Activated CD4-positive, alpha-beta memory T cell treated with anti-CD3 and anti-CD28 coated beads, Interleukin-2, amount 10 ng/mL, durations not matched to agents 7 days and 5 days (primary cell): ENCODE measurements at regions of chr2 and their contacts with region 1.

Region 1: GRCh38 chr2:113173542-113174395 is at the start of gene PSD4:
- DNase-seq: peak; percentile 95
- H3K4me3 Mint-ChIP-seq: peak within 1 kb of the TSS; percentile 80
- H3K27ac Mint-ChIP-seq: peak within 1 kb of the TSS; percentile 85
- H3K4me1 Mint-ChIP-seq: peaks cover 73% of the 10 kb centered on the region
- H3K27me3 Mint-ChIP-seq: no peaks in the 10 kb centered on the region
- total RNA-seq, gene PSD4: 261 to 272 TPM

Region 2: GRCh38 chr2:113098041-113098440 is 75.7 kb before region 1 on chr2:
- CTCF ChIA-PET with region 1: no interaction called
- POLR2A ChIA-PET with region 1: interaction called, 16 read pairs
- DNase-seq: peak; percentile 35
- H3K4me3 Mint-ChIP-seq: peak overlapping the region; percentile 63
- H3K27ac Mint-ChIP-seq: peak overlapping the region; percentile 75
- H3K4me1 Mint-ChIP-seq: peaks cover 44% of the 10 kb centered on the region
- H3K27me3 Mint-ChIP-seq: no peaks in the 10 kb centered on the region

Region 3: GRCh38 chr2:113148606-113149560 is 24.9 kb before region 1 on chr2:
- CTCF ChIA-PET with region 1: interaction called, 3 read pairs
- POLR2A ChIA-PET with region 1: interaction called, 13 read pairs
- DNase-seq: no peak
- H3K4me3 Mint-ChIP-seq: no peak overlapping the region
- H3K27ac Mint-ChIP-seq: no peak overlapping the region
- H3K4me1 Mint-ChIP-seq: no peaks in the 10 kb centered on the region
- H3K27me3 Mint-ChIP-seq: peaks cover 32% of the 10 kb centered on the region

Region 4: DNA sequence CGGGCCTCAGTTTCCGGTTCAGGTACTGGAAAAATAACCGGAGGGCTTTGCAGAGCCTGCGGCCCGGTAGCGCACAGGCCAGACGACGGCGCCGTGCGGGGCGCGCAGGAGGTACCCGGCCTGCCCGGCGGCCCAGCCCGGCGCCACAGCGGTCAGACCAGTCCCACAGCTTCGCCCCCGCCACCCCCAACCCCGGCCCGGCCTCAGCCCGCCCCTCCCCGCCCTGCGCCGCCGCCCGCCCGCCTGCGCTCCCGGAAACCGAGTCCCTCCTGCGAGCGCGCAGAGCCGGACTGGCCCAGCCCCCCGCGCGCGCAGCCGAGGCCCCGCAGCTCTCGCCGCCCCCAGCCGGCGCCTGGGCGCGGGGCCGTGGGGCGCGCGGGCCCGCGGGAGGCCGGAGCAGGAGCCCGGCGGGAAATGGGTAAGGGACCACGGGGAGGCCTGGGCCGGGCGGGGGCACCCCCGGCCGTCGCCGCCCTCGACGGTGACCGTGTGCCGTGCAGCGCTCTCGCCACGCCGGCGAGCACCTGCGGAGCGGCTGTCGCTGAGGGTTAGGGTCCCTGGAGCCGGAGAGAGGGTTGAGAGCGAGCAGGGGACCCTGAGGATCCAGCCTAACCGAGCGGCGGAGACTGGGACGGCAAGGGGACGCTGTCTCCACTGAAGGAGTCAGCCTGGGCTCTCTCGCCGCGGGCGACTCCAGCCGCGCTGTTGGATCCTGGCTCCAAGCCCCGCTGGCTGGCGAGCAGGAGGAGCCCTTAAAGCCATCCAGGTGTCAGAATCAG is 16.5 kb before region 1 on chr2:
- CTCF ChIA-PET with region 1: interaction called, 43 read pairs
- POLR2A ChIA-PET with region 1: interaction called, 108 read pairs
- DNase-seq: peak; percentile 57
- H3K4me3 Mint-ChIP-seq: peak overlapping the region; percentile 79
- H3K27ac Mint-ChIP-seq: peak overlapping the region; percentile 64
- H3K4me1 Mint-ChIP-seq: peaks cover 18% of the 10 kb centered on the region
- H3K27me3 Mint-ChIP-seq: peaks cover 8% of the 10 kb centered on the region

Region 5: GRCh38 chr2:113198790-113199612 is 25.2 kb after region 1 on chr2:
- CTCF ChIA-PET with region 1: interaction called, 22 read pairs
- POLR2A ChIA-PET with region 1: interaction called, 50 read pairs
- DNase-seq: peak; percentile 82
- H3K4me3 Mint-ChIP-seq: no peak overlapping the region
- H3K27ac Mint-ChIP-seq: no peak overlapping the region
- H3K4me1 Mint-ChIP-seq: peaks cover 48% of the 10 kb centered on the region
- H3K27me3 Mint-ChIP-seq: no peaks in the 10 kb centered on the region

Region 6: DNA sequence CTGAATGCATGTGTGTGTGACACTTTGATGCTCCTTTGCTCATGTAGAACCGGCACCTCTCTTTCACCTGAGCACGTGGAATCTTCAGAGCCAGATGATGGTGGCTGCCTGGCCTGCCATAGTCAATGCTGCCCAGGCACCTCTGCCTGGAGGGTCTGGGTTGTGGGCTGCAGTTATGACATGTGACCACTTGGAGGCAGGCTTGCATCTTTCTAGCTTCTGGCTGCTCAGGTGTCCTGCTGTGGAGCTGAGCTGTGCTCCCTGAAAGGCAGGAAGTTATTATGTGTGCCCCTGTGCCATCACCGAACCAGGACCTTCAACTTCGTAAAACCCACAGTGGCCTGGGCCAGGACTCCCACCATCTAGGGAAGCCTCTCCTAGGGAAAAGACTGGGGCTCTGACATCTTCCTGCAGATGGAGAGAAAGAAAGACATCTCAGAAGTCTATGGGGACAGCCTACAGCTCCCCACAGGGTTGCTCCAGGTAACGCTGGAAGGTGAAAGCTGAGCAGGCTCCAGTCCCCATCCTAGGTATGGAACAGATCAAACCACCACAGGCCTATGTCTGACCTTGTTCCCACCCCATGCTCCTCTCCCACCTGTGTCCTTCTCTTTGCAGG is 30.2 kb after region 1 on chr2:
- CTCF ChIA-PET with region 1: interaction called, 22 read pairs
- POLR2A ChIA-PET with region 1: interaction called, 50 read pairs
- DNase-seq: peak; percentile 80
- H3K4me3 Mint-ChIP-seq: no peak overlapping the region
- H3K27ac Mint-ChIP-seq: peak overlapping the region; percentile 61
- H3K4me1 Mint-ChIP-seq: peaks cover 11% of the 10 kb centered on the region
- H3K27me3 Mint-ChIP-seq: no peaks in the 10 kb centered on the region

Region 7: DNA sequence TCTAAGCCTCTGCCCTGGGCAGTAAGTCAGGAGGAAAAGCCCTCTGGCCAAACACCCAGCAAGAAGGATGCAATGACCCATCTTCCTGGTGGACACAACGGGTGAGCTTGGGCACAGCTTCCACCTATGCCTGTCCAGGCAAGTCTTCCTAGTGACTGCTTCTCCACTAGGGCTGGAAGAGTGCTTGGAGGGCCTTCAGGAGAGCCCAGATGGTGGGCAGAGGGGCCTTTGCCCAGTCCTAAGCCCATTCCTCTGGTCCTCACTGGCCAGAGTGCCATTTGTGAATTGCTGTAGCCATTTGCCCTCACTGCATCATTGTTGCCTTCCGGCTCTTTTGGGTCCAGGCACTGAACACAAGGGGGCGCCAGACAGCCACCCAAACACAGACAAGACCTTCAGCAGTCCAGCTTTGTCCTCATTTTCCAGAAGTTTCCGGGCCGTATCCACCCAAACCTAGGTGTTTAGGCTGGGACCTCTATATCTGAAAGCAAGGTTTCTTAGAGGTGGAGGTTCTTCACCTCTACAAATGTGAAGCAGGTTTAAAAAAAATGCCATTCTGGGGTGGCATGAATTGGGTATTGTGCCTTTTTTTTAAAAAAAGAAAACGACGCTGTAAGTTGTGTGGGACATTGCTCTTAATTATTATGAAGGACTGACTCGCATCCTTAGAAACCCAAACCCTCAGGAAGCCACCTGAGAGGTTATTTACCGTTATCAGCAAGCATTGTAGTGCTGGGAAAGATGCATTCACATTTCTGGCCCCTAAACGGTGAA is 75.4 kb after region 1 on chr2:
- CTCF ChIA-PET with region 1: interaction called, 4 read pairs
- POLR2A ChIA-PET with region 1: interaction called, 11 read pairs
- DNase-seq: peak; percentile 82
- H3K4me3 Mint-ChIP-seq: no peak overlapping the region
- H3K27ac Mint-ChIP-seq: peak overlapping the region; percentile 82
- H3K4me1 Mint-ChIP-seq: peaks cover 58% of the 10 kb centered on the region
- H3K27me3 Mint-ChIP-seq: no peaks in the 10 kb centered on the region